ENCODE measurements at regions of chr18 and their contacts with region 1.

Region 1: DNA sequence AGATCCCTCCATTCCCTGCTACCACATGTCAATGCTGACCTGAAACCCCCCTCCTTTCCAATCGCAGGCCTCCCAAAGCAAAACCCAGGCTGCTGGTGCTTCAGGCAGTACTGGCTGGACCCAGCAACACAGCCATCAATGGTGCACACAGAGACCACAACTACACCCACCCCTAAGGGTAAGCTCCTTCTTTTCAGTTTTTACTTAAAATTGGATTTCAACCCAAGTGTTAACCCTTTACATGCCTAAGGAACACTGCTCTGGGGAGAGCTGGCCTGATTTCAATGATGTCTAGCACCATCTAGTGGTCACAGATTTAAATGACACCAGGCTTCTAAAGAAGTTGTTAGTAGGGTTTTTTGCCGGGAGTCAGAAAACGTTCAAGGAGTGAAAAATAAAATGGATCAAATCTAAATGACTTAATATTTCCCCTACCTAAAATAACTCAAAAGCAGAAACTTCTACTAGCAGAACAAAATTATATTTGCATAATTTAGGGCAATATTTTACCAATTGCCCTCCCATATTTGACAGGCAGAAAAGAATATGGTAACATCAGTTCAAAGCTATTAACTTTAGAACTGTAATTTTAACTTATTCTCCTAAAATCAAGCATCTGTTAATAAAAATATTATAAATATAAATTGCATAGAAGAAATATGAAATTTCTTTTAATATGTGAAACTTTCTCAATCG is 24.6 kb downstream of the FECH start:
- DNase-seq: peak; percentile 16
- ATAC-seq: peak; percentile 52; the same call in 1 of the 2 replicates
- H3K4me3 ChIP-seq: no peak overlapping the region
- H3K27ac ChIP-seq: no peak overlapping the region
- H3K4me1 ChIP-seq: no peaks in the 10 kb centered on the region
- H3K27me3 ChIP-seq: no peaks in the 10 kb centered on the region
- CTCF ChIP-seq: peak; percentile 47 to 96 (median 65); a peak in 5 of 6 replicates
- POLR2A ChIP-seq: no peak
- RAD21 ChIP-seq: peak; percentile 68

Region 2: GRCh38 chr18:56702946-56703345 is 858.9 kb before region 1 on chr18:
- CTCF ChIA-PET with region 1: interaction called, 3 read pairs
- POLR2A ChIA-PET with region 1: no interaction called
- RAD21 ChIA-PET with region 1: no interaction called
- intact Hi-C with region 1: loop called (anchors 5 kb)
- DNase-seq: peak; percentile 58
- ATAC-seq: peak; percentile 87
- H3K4me3 ChIP-seq: no peak overlapping the region
- H3K27ac ChIP-seq: no peak overlapping the region
- H3K4me1 ChIP-seq: peaks cover 0 to 4% of the 10 kb centered on the region in 2 experiments; a peak in 1 of 4 replicates
- H3K27me3 ChIP-seq: no peaks in the 10 kb centered on the region
- CTCF ChIP-seq: peak; percentile 46 to 50 (median 49); a peak in 4 of 6 replicates
- POLR2A ChIP-seq: no peak
- RAD21 ChIP-seq: peak; percentile 59

Region 3: GRCh38 chr18:56748698-56749268 is 813.1 kb before region 1 on chr18:
- CTCF ChIA-PET with region 1: interaction called, 5 read pairs
- POLR2A ChIA-PET with region 1: no interaction called
- RAD21 ChIA-PET with region 1: no interaction called
- intact Hi-C with region 1: loop called (anchors 2 kb)
- DNase-seq: peak; percentile 12
- ATAC-seq: no peak
- H3K4me3 ChIP-seq: no peak overlapping the region
- H3K27ac ChIP-seq: no peak overlapping the region
- H3K4me1 ChIP-seq: no peaks in the 10 kb centered on the region
- H3K27me3 ChIP-seq: no peaks in the 10 kb centered on the region
- CTCF ChIP-seq: peak; percentile 33 to 53 (median 51); a peak in 5 of 6 replicates
- POLR2A ChIP-seq: no peak
- RAD21 ChIP-seq: peak; percentile 76